GM23248 (cell line): ENCODE measurements at regions of chr3 and their contacts with region 1.

Region 1: DNA sequence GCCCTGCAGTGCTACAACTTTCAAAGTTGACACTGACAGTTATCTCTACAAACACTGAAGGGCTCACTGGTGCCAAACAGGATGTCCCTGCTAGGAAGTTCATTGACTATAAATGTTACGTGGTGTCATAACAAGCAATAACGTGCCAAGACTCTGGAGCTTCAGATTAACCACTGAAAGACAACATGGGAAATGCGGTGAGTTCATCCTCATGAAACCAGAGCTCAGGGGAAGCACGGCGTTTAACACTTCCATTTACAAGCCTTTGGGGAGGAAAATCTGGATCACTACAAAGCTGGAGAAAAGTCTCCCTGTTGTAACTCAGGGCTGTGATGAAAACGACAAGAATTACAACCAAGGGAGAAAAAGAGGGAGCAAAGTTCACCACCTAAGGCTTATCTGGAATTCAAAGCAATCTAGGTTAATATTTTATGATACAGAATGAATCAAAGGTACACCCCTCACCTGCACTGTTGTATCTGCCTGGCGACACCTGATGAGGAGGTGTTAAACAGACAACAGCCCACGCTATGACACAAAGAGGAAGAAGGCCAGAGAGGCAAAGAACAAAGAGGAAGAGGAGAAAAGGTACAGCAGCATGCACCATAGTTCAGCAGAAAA is 27.0 kb downstream of the SHQ1 start:
- DNase-seq: no peak
- H3K4me3 ChIP-seq: no peak overlapping the region
- H3K27ac ChIP-seq: no peak overlapping the region
- H3K4me1 ChIP-seq: peaks cover 45% of the 10 kb centered on the region
- H3K27me3 ChIP-seq: no peaks in the 10 kb centered on the region

Region 2: GRCh38 chr3:71734883-71735282 is 1086.4 kb before region 1 on chr3:
- in situ Hi-C with region 1: loop called (anchors 10 kb)
- DNase-seq: no peak
- H3K4me3 ChIP-seq: no peak overlapping the region
- H3K27ac ChIP-seq: no peak overlapping the region
- H3K4me1 ChIP-seq: no peaks in the 10 kb centered on the region
- H3K27me3 ChIP-seq: peaks cover 45% of the 10 kb centered on the region

Region 3: GRCh38 chr3:71875461-71875947 is 945.8 kb before region 1 on chr3:
- in situ Hi-C with region 1: loop called (anchors 10 kb)
- DNase-seq: peak; percentile 86
- H3K4me3 ChIP-seq: no peak overlapping the region
- H3K27ac ChIP-seq: no peak overlapping the region
- H3K4me1 ChIP-seq: no peaks in the 10 kb centered on the region
- H3K27me3 ChIP-seq: peaks cover 10% of the 10 kb centered on the region; the same call in 1 of the 2 replicates

Region 4: GRCh38 chr3:71955240-71956068 is 865.8 kb before region 1 on chr3:
- in situ Hi-C with region 1: loop called (anchors 10 kb)
- DNase-seq: peak; percentile 89
- H3K4me3 ChIP-seq: no peak overlapping the region
- H3K27ac ChIP-seq: no peak overlapping the region
- H3K4me1 ChIP-seq: peaks cover 4% of the 10 kb centered on the region
- H3K27me3 ChIP-seq: no peaks in the 10 kb centered on the region